ENCODE measurements at regions of chr17 and their contacts with region 1.

Region 1: GRCh38 chr17:54992797-54993639 is 24.5 kb downstream of the STXBP4 start:
- DNase-seq: peak; percentile 33
- CTCF ChIP-seq: peak; percentile 68

Region 2: GRCh38 chr17:55190748-55191147 is 197.7 kb after region 1 on chr17:
- in situ Hi-C with region 1: no loop called
- DNase-seq: no peak
- CTCF ChIP-seq: no peak

Region 3: GRCh38 chr17:55303701-55304145 is 310.7 kb after region 1 on chr17:
- in situ Hi-C with region 1: loop called (anchors 25 kb)
- DNase-seq: no peak
- CTCF ChIP-seq: no peak

Region 4: GRCh38 chr17:55513885-55514591 is 521.0 kb after region 1 on chr17:
- in situ Hi-C with region 1: loop called (anchors 25 kb)
- DNase-seq: peak; percentile 59
- CTCF ChIP-seq: peak; percentile 88

Measured in GM13977 (cell line).